GM13977 (cell line): ENCODE measurements at regions of chr6 and their contacts with region 1.

Region 1: DNA sequence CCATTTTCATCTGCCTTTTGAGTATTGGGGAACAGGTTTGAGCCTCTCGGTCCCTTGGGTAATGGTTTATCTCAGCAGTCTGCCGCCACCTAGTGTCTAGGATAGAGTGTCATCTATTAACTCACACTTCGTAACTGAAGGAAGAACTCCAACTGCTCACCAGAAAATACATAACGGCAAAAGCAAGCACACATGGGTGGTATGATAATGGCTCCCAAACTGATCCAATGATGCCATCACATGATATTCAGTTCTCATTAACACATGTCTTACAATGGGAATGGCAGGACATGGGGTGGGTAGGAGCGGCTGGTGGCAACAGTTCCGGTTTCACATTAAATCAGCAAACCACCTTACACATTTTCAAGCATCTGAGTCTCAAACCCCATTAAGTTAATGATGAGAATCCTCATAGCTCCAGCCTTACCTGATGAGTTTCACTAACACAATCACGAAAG is 110.7 kb upstream of the PHACTR1 start:
- DNase-seq: peak; percentile 23
- CTCF ChIP-seq: peak; percentile 76

Region 2: GRCh38 chr6:11585426-11586016 is 1020.4 kb before region 1 on chr6:
- in situ Hi-C with region 1: loop called (anchors 5 kb)
- DNase-seq: peak; percentile 66
- CTCF ChIP-seq: peak; percentile 62

Region 3: DNA sequence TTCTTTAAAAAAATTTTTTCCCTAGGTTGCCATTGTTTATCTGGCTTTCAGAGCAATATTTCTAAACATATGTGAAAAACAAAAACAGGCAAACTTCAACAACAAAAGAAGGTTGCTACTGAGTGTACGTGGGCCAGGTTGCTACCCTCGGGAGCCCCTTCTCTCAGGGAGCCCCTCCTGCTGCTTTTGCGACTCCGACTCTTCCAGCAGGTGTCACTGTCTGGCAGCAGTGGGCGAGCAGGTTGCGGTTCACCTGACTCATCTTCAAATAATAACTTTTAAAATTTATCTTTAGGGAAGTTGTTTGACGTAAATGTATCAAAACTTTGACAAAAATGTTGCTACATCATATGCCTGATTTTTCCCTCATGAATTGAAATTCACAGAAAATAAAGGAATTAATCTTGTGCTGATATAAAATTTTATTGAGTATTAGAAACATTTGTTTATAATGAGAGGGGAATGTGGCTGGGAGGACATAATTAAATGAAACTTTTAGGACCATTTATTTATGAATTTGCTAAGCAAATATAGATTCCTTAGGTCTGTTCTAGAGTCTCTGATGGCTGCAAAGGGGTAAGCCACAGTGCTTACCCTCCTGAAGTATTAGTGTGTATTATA is 455.0 kb before region 1 on chr6:
- in situ Hi-C with region 1: loop called (anchors 25 kb)
- DNase-seq: no peak
- CTCF ChIP-seq: peak; percentile 49

Region 4: DNA sequence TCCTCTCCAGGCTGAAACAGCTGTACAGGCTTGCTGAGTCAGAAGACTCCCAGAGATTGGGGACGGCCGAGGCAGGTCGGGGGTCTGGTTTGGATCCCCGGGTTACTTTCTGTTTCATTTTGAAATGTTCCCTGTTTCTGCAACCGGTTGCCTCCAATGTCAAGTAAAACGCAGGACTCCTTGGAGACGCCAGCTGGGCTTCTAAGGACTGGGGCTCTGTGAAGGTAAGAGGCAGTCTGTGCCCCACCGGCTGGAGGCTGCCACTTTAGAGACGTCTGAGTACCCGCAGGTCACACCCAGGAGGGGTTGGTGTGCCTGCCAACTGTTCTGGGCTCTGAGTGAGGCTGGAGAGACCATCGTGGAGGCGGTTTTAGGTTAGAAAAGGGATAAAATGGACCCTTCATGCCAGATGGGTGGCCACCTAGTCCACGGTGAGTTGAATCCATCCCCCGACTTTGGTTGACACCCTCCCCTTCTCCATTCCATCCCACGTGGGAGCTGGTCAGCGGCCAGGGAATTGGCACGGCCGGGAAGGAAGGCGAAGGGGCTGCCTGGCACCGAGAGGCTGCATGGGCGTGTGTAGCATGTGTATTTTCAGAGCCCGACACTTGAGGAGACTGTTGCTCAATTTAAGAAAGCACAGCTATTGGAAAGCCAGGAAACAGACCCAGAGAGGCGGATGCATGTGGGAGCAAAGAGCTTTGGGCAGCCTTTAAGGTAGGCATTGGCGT is 351.6 kb after region 1 on chr6:
- in situ Hi-C with region 1: no loop called
- DNase-seq: no peak
- CTCF ChIP-seq: no peak

Region 5: DNA sequence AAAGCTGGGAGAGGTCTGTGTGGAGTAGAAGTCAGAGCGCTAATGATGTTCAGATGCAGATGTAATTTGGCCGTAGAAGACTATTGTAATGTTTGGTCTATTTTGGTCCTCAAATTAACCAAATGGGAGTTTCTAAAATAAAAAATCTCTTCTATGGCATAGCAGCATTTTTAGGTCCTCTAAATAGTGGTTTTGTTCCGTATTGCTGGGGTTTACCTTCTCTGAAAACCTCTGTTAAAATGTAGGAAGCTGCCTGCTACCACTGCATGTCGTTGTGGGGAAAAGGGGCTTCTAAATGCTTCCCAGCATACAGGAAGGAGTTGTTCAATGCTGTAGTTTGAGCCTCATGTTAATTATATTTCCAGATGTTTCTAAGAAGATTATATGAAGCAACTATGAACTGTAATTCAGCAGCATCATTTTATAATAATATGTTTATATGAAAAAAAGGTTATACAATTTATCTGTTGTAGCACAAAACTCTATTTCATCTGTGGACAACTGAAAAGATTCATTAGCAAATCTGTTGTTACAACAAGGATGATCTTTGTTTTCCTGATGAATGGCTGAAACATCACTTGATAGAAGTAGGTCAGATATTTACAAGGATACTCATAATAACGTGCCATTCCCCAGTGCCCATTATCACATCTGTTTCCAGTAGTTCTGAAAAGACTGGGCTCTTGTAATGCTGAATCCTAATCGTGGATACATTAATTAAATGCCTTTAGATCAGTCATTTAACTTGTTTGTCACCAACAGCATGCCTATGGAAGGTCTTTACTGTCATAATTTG is 465.8 kb after region 1 on chr6:
- in situ Hi-C with region 1: no loop called
- DNase-seq: no peak
- CTCF ChIP-seq: no peak